Dorsolateral prefrontal cortex (tissue), 120 donors: ENCODE measurements at regions of chr19 and their contacts with region 1.

Region 1: DNA sequence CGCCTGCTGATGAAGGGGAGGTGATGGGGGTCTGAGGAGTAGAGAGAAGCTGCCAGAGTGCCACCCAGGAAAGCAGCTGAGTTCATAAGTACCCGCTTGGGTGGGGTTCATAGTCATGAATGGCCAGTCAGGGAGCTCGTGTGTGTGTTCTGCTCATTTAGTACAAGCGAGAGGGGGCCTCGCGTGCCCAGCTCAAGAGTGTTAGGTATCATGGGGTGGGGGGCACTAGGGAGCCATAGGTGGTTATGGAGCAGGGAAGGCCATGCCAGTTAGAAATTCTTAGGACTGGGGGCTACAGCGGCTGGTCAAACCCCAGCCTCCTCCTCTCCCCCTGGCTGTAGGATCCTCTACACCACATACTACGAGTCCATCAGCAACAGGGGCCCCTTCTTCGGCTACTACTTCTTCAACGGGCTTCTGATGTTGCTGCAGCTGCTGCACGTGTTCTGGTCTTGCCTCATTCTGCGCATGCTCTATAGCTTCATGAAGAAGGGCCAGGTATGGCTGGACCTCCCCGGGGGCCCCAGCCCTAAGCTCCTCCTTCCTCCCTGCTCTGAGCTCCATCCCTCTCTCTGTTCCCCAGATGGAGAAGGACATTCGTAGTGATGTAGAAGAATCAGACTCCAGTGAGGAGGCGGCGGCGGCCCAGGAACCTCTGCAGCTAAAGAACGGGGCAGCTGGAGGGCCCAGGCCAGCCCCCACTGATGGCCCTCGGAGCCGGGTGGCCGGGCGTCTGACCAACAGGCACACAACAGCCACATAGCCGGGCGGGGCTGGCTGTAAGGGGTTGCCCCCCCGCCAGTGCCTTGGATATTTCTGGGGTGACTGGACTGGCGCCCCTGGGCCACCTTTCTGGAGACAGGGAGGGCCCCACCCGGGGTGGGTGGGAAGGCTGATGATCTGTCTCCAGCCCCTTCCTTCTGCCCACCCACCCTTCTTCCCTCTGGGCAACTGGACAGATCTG is 46.5 kb downstream of the CD320 start:
- DNase-seq: peak in 3 of 10 donors; percentile 18 to 44 (median 36)
- H3K4me3 ChIP-seq: no peak overlapping the region
- H3K27ac ChIP-seq: no peak overlapping the region
- H3K27me3 ChIP-seq: no peaks in the 10 kb centered on the region
- CTCF ChIP-seq: no peak

Region 2: GRCh38 chr19:8311461-8312376 is 50.1 kb after region 1 on chr19:
- intact Hi-C with region 1: loop called in 1 of 2 experiments (anchors 10 kb)
- DNase-seq: peak in 1 of 10 donors; percentile 41
- H3K4me3 ChIP-seq: no peak overlapping the region
- H3K27ac ChIP-seq: peak overlapping the region in 15 of 59 donors; percentile 4 to 74 (median 35)
- H3K27me3 ChIP-seq: no peaks in the 10 kb centered on the region
- CTCF ChIP-seq: no peak

Region 3: DNA sequence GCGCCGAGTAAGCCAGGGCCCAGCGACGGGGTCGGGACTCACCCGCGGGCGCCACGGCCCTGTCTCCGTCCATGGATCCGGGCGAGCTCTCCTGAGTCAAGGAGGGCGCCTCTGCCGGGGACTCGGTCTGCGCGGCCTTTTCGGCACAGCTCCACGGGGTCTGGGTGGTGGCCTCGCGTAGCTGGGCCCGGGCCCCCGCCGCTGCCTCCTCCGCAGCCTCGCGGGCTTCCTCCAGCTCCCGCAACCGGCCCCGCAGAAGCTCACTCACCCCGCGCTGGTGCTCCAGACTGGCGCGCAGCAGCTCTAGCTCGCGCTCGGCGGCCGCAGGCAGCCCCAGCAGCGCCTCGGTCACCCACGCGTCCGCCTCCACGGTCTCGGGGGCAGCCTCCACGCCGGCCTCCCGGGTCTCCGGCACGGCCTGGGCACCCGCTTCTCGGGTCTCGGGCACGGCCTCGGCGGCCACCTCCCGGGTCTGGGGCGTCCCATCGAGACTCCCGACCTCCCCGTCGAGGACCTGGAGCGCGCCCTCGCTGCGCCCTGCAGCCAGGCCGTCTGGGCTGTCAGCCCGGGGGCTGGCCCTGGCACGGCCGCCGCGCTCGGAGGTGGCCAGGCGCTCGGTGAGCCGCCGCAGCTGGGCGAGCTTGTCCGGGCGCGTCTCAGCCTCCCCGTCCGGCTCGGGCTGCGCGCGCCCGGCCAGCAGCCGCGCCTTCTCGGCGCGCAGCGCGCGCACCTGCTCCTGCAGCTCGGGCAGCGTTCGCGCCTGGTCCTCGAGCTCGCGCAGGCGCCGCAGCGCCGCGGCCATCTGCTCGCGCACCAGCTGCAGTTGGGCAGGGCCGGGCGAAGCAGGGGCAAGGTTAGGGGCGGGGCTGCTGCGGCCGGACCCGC is 73.1 kb after region 1 on chr19:
- intact Hi-C with region 1: no loop called
- DNase-seq: peak in 1 of 10 donors; percentile 61
- H3K4me3 ChIP-seq: peak overlapping the region in 47 of 59 donors; percentile 3 to 63 (median 37)
- H3K27ac ChIP-seq: no peak overlapping the region
- H3K27me3 ChIP-seq: peaks cover 0 to 49% (median 23%) of the 10 kb centered on the region in 45 donors
- CTCF ChIP-seq: no peak

Region 4: GRCh38 chr19:8897106-8897505 is 635.5 kb after region 1 on chr19:
- intact Hi-C with region 1: no loop called
- DNase-seq: no peak
- H3K4me3 ChIP-seq: no peak overlapping the region
- H3K27ac ChIP-seq: no peak overlapping the region
- H3K27me3 ChIP-seq: peaks cover 0 to 17% (median 0%) of the 10 kb centered on the region in 45 donors
- CTCF ChIP-seq: no peak